ENCODE measurements at regions of chrX and their contacts with region 1.

Region 1: GRCh38 chrX:39613482-39613921 is 484.3 kb downstream of the BCOR start:
- DNase-seq: peak; percentile 29
- H3K4me3 Mint-ChIP-seq: peak overlapping the region; percentile 70
- H3K27ac Mint-ChIP-seq: peak overlapping the region; percentile 87
- H3K4me1 Mint-ChIP-seq: peaks cover 22% of the 10 kb centered on the region
- H3K27me3 Mint-ChIP-seq: no peaks in the 10 kb centered on the region

Region 2: DNA sequence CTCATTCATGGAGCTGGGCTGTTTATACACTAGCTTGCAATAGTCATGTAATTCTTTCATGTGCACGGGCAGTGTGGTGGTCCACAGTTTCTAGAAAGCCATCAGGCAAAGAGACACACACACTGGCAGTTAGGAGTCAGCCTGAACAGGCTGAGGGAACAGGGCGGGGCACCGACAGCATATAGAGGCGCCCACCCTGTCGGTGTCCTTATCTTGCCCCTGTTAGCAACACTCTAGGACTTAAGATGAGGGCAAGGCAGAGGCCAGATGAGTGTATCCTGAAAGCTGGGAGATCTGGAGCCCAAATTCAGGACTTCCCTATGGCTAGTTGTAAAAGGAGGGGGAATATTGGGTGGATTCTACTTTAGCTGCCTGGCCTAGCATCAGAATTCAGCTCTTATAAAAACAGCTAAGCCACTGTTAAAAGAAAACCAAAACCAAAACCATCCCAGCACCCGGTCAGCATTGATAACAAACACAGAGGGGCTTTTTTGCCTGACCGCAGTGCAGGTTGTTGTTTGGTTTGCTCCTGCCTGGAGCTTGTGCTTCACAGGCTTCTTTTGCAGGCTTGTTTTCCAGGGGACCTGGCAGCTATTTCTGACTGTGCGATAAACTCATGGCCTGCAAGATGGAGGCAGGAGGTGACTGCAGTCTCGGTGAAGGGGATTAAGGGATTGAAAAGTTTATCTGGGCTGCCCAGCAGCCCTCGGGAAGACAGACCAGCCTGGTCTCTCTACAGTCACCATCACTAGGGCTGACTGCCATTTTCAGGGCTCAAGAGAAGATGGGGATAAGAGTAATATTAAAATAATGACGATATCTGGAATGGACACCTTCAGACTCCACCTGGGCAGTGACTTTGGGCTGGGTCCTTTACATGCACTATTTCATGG is 173.3 kb before region 1 on chrX:
- CTCF ChIA-PET with region 1: no interaction called
- intact Hi-C with region 1: loop called (anchors 1 kb)
- DNase-seq: peak; percentile 44
- H3K4me3 Mint-ChIP-seq: peak overlapping the region; percentile 42
- H3K27ac Mint-ChIP-seq: peak overlapping the region; percentile 86
- H3K4me1 Mint-ChIP-seq: peaks cover 29% of the 10 kb centered on the region
- H3K27me3 Mint-ChIP-seq: no peaks in the 10 kb centered on the region

Region 3: GRCh38 chrX:39491548-39492297 is 121.8 kb before region 1 on chrX:
- CTCF ChIA-PET with region 1: no interaction called
- intact Hi-C with region 1: loop called (anchors 1 kb)
- DNase-seq: peak; percentile 76
- H3K4me3 Mint-ChIP-seq: peak overlapping the region; percentile 21
- H3K27ac Mint-ChIP-seq: peak overlapping the region; percentile 76
- H3K4me1 Mint-ChIP-seq: peaks cover 53% of the 10 kb centered on the region
- H3K27me3 Mint-ChIP-seq: no peaks in the 10 kb centered on the region

Region 4: DNA sequence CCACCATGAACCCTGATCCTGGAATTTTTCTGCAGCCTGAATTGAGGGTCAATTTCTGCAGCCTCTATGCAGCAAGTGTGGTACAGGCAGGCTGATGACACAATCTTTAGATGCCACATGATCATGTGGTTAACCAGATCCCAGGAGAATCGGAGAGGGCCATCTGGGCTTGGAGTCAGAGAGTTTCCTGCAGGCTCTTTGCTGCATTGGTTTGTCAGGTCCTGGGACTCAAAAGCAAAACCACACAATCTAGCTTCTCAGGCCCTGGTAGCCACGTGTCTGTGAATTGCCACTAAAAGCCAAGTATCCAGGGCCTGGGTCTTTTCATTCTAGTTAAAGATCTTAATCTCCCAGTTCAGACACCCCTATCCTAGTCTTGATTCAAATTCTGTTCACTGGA is 19.8 kb after region 1 on chrX:
- CTCF ChIA-PET with region 1: no interaction called
- intact Hi-C with region 1: no loop called
- DNase-seq: no peak
- H3K4me3 Mint-ChIP-seq: no peak overlapping the region
- H3K27ac Mint-ChIP-seq: no peak overlapping the region
- H3K4me1 Mint-ChIP-seq: peaks cover 15% of the 10 kb centered on the region
- H3K27me3 Mint-ChIP-seq: no peaks in the 10 kb centered on the region

Region 5: DNA sequence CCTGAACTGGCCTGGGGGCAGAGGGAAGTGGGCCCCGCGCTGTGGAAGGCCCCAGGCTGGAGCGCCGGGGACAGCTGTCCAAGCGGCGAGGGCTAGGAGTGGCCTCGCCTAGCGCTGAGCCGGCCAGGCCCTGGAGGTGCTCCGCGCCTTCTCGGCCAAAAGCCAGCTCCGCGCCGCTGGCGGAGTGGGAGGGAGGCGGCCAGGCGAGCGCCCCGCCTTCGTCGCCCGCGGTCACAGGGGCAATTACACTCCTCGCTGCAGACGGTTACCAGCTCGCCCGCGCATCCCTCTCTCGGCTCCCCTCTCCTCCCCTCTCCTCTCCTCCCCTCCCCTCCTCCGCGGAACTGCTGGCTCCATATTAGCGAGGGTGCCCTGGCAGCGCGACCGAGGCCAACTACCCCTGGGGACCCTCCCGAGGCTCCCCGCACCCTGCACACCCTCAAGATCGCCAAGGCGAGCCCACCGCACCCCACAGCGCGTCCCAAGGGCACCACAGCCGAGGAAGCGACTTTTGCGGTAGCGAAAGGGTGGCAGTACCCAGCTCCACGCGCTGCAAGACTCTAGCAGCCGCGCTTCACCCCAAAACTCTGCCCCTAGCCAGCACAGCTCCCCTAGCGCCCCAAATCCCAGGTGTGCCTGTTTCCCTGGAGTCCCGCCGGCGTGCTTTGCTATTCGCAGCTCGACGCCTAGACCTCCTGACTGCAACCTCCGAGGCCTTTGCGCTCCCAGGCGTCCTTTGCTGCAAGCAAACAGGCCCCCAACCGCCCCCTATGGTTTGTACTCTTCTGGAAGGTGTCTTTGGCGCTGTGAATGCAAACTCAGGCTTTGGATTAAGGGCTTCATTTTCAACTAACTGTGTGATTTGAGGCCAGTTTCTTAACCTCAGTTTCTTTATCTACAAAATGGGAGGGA is 392.9 kb after region 1 on chrX:
- CTCF ChIA-PET with region 1: no interaction called
- intact Hi-C with region 1: loop called (anchors 10 kb)
- DNase-seq: peak; percentile 47
- H3K4me3 Mint-ChIP-seq: peak overlapping the region; percentile 36
- H3K27ac Mint-ChIP-seq: no peak overlapping the region
- H3K4me1 Mint-ChIP-seq: peaks cover 28% of the 10 kb centered on the region
- H3K27me3 Mint-ChIP-seq: peaks cover 37% of the 10 kb centered on the region

Measured in activated naive CD4-positive, alpha-beta T cell treated with anti-CD3 and anti-CD28 coated beads for 36 hours (primary cell).